ENCODE measurements at regions of chr11 and their contacts with region 1.

Region 1: GRCh38 chr11:9160166-9160565 is 68.8 kb upstream of the SCUBE2 start:
- DNase-seq: no peak
- H3K4me3 ChIP-seq: no peak overlapping the region
- H3K4me3 Mint-ChIP-seq: no peak overlapping the region
- H3K27ac ChIP-seq: no peak overlapping the region
- H3K27ac Mint-ChIP-seq: no peak overlapping the region
- H3K4me1 ChIP-seq: no peaks in the 10 kb centered on the region
- H3K4me1 Mint-ChIP-seq: no peaks in the 10 kb centered on the region
- H3K27me3 ChIP-seq: no peaks in the 10 kb centered on the region
- H3K27me3 Mint-ChIP-seq: no peaks in the 10 kb centered on the region

Region 2: DNA sequence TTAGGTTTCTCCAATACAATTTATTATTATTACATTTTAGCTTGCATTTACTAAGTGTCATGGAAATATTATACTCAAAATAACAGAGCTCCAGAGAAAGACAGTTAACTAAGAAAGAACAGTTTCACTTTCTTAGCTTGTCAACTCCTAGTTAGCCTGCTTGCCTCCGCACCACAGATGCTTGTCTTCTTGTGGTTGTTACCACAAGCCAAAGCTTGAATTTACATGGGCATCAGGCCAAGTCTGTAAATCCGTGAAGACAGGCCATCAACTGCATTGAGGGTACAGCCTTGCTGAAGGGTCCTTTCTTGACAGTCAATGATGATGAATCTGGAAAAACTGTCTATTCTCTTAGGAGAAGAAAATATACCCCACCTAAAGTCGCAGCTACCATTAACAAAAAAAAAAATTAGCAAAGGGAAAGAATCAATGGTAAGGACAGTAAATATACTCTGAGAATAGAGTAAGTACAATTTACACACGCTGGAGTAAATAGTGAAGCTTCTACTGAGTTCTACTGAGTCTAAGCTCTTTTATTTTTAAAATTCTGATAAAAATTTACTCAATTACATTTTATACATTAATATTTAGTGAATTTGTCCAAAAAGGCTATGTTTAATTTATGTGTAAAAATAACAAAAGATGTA is 120.6 kb after region 1 on chr11:
- CTCF ChIA-PET with region 1: no interaction called
- POLR2A ChIA-PET with region 1: interaction called, 10 read pairs
- DNase-seq: peak in 4 of 5 donors; percentile 24 to 75 (median 62)
- H3K4me3 ChIP-seq: peak overlapping the region; percentile 9
- H3K4me3 Mint-ChIP-seq: peak overlapping the region in 6 of 7 donors; percentile 5 to 79 (median 59)
- H3K27ac ChIP-seq: no peak overlapping the region
- H3K27ac Mint-ChIP-seq: peak overlapping the region in 5 of 8 donors; percentile 14 to 63 (median 32)
- H3K4me1 ChIP-seq: peaks cover 16% of the 10 kb centered on the region
- H3K4me1 Mint-ChIP-seq: peaks cover 8 to 20% (median 16%) of the 10 kb centered on the region in 3 donors
- H3K27me3 ChIP-seq: no peaks in the 10 kb centered on the region
- H3K27me3 Mint-ChIP-seq: no peaks in the 10 kb centered on the region

Measured in CD8-positive, alpha-beta memory T cell (primary cell).